ENCODE measurements at regions of chr16 and their contacts with region 1.

Region 1: GRCh38 chr16:66406534-66407221 is 20.4 kb upstream of the BEAN1 start:
- DNase-seq: peak; percentile 70 to 92 (median 84)
- ATAC-seq: peak; percentile 90
- H3K4me3 ChIP-seq: peak overlapping the region; percentile 76
- H3K4me3 Mint-ChIP-seq: peak overlapping the region; percentile 86 to 94 (median 89)
- H3K27ac ChIP-seq: no peak overlapping the region
- H3K27ac Mint-ChIP-seq: peak overlapping the region; percentile 34 to 97 (median 79)
- H3K4me1 ChIP-seq: peaks cover 19 to 27% of the 10 kb centered on the region in 2 donors
- H3K4me1 Mint-ChIP-seq: peaks cover 14 to 40% (median 33%) of the 10 kb centered on the region in 7 donors
- H3K27me3 ChIP-seq: no peaks in the 10 kb centered on the region
- H3K27me3 Mint-ChIP-seq: peaks cover 0 to 24% (median 5%) of the 10 kb centered on the region in 5 donors

Region 2: GRCh38 chr16:65658349-65658748 is 748.3 kb before region 1 on chr16:
- CTCF ChIA-PET with region 1: no interaction called
- POLR2A ChIA-PET with region 1: no interaction called
- intact Hi-C with region 1: no loop called
- DNase-seq: no peak
- ATAC-seq: no peak
- H3K4me3 ChIP-seq: no peak overlapping the region
- H3K4me3 Mint-ChIP-seq: no peak overlapping the region
- H3K27ac ChIP-seq: no peak overlapping the region
- H3K27ac Mint-ChIP-seq: no peak overlapping the region
- H3K4me1 ChIP-seq: no peaks in the 10 kb centered on the region
- H3K4me1 Mint-ChIP-seq: no peaks in the 10 kb centered on the region
- H3K27me3 ChIP-seq: no peaks in the 10 kb centered on the region
- H3K27me3 Mint-ChIP-seq: peaks cover 0 to 20% (median 8%) of the 10 kb centered on the region in 5 donors

Region 3: GRCh38 chr16:66427871-66428681 is 21.4 kb after region 1 on chr16:
- CTCF ChIA-PET with region 1: no interaction called
- POLR2A ChIA-PET with region 1: no interaction called
- intact Hi-C with region 1: loop called in 1 of 2 experiments (anchors 2 kb)
- DNase-seq: peak in 1 of 9 donors; percentile 2
- ATAC-seq: peak; percentile 34
- H3K4me3 ChIP-seq: no peak overlapping the region
- H3K4me3 Mint-ChIP-seq: peak overlapping the region; percentile 20 to 79 (median 60)
- H3K27ac ChIP-seq: no peak overlapping the region
- H3K27ac Mint-ChIP-seq: no peak overlapping the region
- H3K4me1 ChIP-seq: peaks cover 0 to 11% of the 10 kb centered on the region in 2 donors
- H3K4me1 Mint-ChIP-seq: peaks cover 2 to 16% (median 6%) of the 10 kb centered on the region in 7 donors
- H3K27me3 ChIP-seq: peaks cover 4 to 13% of the 10 kb centered on the region in 2 donors
- H3K27me3 Mint-ChIP-seq: peaks cover 64 to 79% (median 68%) of the 10 kb centered on the region in 5 donors

Region 4: GRCh38 chr16:66516808-66517585 is 110.3 kb after region 1 on chr16:
- CTCF ChIA-PET with region 1: interaction called, 4 read pairs
- POLR2A ChIA-PET with region 1: interaction called, 3 read pairs
- intact Hi-C with region 1: loop called in 1 of 2 experiments (anchors 1 kb)
- DNase-seq: peak in 6 of 9 donors; percentile 36 to 80 (median 44)
- ATAC-seq: peak; percentile 92
- H3K4me3 ChIP-seq: peak overlapping the region; percentile 22
- H3K4me3 Mint-ChIP-seq: peak overlapping the region; percentile 23 to 88 (median 72)
- H3K27ac ChIP-seq: peak overlapping the region; percentile 58
- H3K27ac Mint-ChIP-seq: peak overlapping the region; percentile 67 to 99 (median 89)
- H3K4me1 ChIP-seq: peaks cover 54 to 61% of the 10 kb centered on the region in 2 donors
- H3K4me1 Mint-ChIP-seq: peaks cover 60 to 79% (median 71%) of the 10 kb centered on the region in 7 donors
- H3K27me3 ChIP-seq: no peaks in the 10 kb centered on the region
- H3K27me3 Mint-ChIP-seq: no peaks in the 10 kb centered on the region

Region 5: GRCh38 chr16:66562407-66562806 is 155.7 kb after region 1 on chr16:
- CTCF ChIA-PET with region 1: interaction called, 11 read pairs
- POLR2A ChIA-PET with region 1: no interaction called
- intact Hi-C with region 1: no loop called
- DNase-seq: peak in 4 of 9 donors; percentile 21 to 53 (median 34)
- ATAC-seq: peak; percentile 60
- H3K4me3 ChIP-seq: no peak overlapping the region
- H3K4me3 Mint-ChIP-seq: no peak overlapping the region
- H3K27ac ChIP-seq: no peak overlapping the region
- H3K27ac Mint-ChIP-seq: peak overlapping the region in 5 of 9 donors; percentile 14 to 71 (median 26)
- H3K4me1 ChIP-seq: peaks cover 22 to 46% of the 10 kb centered on the region in 2 donors
- H3K4me1 Mint-ChIP-seq: peaks cover 31 to 67% (median 41%) of the 10 kb centered on the region in 7 donors
- H3K27me3 ChIP-seq: no peaks in the 10 kb centered on the region
- H3K27me3 Mint-ChIP-seq: no peaks in the 10 kb centered on the region

Region 6: GRCh38 chr16:66650707-66651473 is 244.2 kb after region 1 on chr16:
- CTCF ChIA-PET with region 1: interaction called, 3 read pairs
- POLR2A ChIA-PET with region 1: no interaction called
- intact Hi-C with region 1: loop called (anchors 1 kb)
- DNase-seq: peak; percentile 57 to 87 (median 81)
- ATAC-seq: peak; percentile 99
- H3K4me3 ChIP-seq: peak overlapping the region; percentile 44
- H3K4me3 Mint-ChIP-seq: peak overlapping the region; percentile 50 to 86 (median 76)
- H3K27ac ChIP-seq: no peak overlapping the region
- H3K27ac Mint-ChIP-seq: peak overlapping the region in 6 of 9 donors; percentile 41 to 71 (median 62)
- H3K4me1 ChIP-seq: peaks cover 0 to 5% of the 10 kb centered on the region in 2 donors
- H3K4me1 Mint-ChIP-seq: peaks cover 0 to 15% (median 9%) of the 10 kb centered on the region in 7 donors
- H3K27me3 ChIP-seq: no peaks in the 10 kb centered on the region
- H3K27me3 Mint-ChIP-seq: peaks cover 2 to 11% (median 6%) of the 10 kb centered on the region in 5 donors

Region 7: DNA sequence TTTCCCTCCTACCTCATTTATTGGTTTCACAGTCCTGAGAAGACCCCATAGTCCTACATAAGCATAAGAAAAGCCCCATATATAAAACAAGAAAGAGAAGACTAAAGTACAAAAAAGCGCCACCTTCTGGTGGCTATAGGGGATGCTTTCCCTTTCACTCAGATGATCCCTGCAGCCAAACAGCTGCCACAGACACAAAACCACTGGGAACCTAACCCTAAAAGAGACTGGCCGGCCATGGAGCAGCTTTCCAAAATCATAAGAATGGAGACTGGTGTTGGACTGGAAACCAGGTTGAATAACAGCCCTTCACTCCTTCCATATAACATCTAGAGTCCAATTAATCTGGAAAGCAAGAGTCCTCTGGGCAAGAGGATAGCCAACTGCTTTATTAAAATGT is 333.3 kb after region 1 on chr16:
- CTCF ChIA-PET with region 1: interaction called, 7 read pairs
- POLR2A ChIA-PET with region 1: no interaction called
- intact Hi-C with region 1: loop called (anchors 1 kb)
- DNase-seq: peak in 5 of 9 donors; percentile 4 to 32 (median 25)
- ATAC-seq: peak; percentile 62
- H3K4me3 ChIP-seq: no peak overlapping the region
- H3K4me3 Mint-ChIP-seq: no peak overlapping the region
- H3K27ac ChIP-seq: no peak overlapping the region
- H3K27ac Mint-ChIP-seq: peak overlapping the region in 3 of 9 donors; percentile 1 to 40 (median 15)
- H3K4me1 ChIP-seq: peaks cover 0 to 6% of the 10 kb centered on the region in 2 donors
- H3K4me1 Mint-ChIP-seq: peaks cover 15 to 38% (median 29%) of the 10 kb centered on the region in 7 donors
- H3K27me3 ChIP-seq: no peaks in the 10 kb centered on the region
- H3K27me3 Mint-ChIP-seq: no peaks in the 10 kb centered on the region

Region 8: DNA sequence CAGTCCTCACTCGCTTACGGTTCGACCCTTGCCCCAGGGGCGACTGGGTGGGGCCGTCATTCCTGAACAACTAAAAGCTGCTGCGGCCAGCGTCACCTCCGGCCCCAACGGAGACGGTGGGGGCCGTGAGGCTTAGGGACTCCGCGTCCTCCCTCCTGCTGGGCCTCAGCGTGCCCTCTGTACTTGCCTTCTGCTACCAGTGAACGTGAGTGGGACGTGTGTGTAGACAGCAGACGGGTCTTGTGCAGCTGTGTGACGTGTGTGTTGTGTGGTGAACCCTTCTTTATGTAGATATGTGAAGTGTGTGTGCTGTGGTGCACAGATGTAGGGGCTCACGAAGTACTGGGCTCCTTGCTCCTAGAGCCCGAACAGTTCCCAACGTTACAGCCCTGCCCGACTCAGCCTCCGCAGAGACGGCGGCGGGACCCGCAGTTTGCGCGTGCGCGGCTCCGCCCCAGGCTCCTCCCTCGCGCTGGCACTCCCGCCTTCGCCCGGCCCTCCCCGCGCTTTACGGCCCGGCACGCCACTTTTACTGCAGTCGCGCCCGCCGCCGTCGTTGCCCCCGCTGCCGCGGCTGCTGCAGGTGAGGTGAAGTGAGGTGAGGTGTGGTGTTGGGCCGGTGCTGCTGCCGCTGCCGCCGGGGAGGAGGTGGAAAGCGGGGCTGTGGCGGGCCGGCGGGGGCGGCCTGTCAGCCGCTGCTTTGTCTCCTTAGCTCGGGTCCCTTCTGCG is 702.9 kb after region 1 on chr16 and contains the start of gene PHAF1:
- CTCF ChIA-PET with region 1: no interaction called
- POLR2A ChIA-PET with region 1: no interaction called
- intact Hi-C with region 1: no loop called
- DNase-seq: peak; percentile 93 to 99 (median 97)
- ATAC-seq: peak; percentile 95
- H3K4me3 ChIP-seq: peak within 1 kb of the TSS; percentile 91
- H3K4me3 Mint-ChIP-seq: peak within 1 kb of the TSS; percentile 91 to 96 (median 94)
- H3K27ac ChIP-seq: peak within 1 kb of the TSS; percentile 78
- H3K27ac Mint-ChIP-seq: peak within 1 kb of the TSS; percentile 81 to 95 (median 87)
- H3K4me1 ChIP-seq: peaks cover 9 to 11% of the 10 kb centered on the region in 2 donors
- H3K4me1 Mint-ChIP-seq: peaks cover 19 to 43% (median 31%) of the 10 kb centered on the region in 7 donors
- H3K27me3 ChIP-seq: no peaks in the 10 kb centered on the region
- H3K27me3 Mint-ChIP-seq: no peaks in the 10 kb centered on the region
- total RNA-seq, gene PHAF1: 17.8 to 29.6 (median 21.2) TPM

Measured in naive thymus-derived CD4-positive, alpha-beta T cell (primary cell).